Transverse colon (tissue), 4 donors: ENCODE measurements at regions of chr15 and their contacts with region 1.

Region 1: DNA sequence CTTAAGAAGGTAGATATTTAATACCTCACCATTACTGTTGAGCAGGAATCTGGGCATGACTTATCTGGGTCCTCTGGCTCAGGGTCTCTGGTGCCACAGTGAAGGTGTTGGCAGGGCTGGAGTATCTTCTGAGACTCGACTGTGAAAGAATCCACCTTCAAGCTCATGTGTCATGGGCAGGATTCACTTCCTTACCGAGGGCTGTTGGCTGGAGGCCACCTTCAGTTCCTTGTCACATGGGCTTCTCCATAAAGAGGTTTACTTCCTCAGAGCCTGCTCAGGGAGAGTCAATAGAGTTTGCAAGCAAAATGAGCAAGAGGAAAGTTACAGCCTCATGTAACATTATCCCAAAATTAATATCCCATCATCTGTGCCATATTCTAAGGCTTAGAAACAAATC is 459.5 kb downstream of the NR2F2 start:
- DNase-seq: no peak
- H3K4me3 ChIP-seq: no peak overlapping the region
- H3K27ac ChIP-seq: no peak overlapping the region
- H3K4me1 ChIP-seq: no peaks in the 10 kb centered on the region
- H3K27me3 ChIP-seq: no peaks in the 10 kb centered on the region
- CTCF ChIP-seq: no peak
- EP300 ChIP-seq: no peak
- POLR2A ChIP-seq: no peak

Region 2: GRCh38 chr15:96893159-96893906 is 103.3 kb after region 1 on chr15:
- in situ Hi-C with region 1: loop called in 1 of 4 experiments (anchors 25 kb)
- intact Hi-C with region 1: no loop called
- DNase-seq: no peak
- H3K4me3 ChIP-seq: no peak overlapping the region
- H3K27ac ChIP-seq: no peak overlapping the region
- H3K4me1 ChIP-seq: peaks cover 0 to 12% (median 1%) of the 10 kb centered on the region in 4 donors
- H3K27me3 ChIP-seq: no peaks in the 10 kb centered on the region
- CTCF ChIP-seq: peak in 4 of 5 experiments; percentile 12 to 46 (median 36)
- EP300 ChIP-seq: no peak
- POLR2A ChIP-seq: no peak